PC-9 (cell line): ENCODE measurements at regions of chr4 and their contacts with region 1.

Region 1: DNA sequence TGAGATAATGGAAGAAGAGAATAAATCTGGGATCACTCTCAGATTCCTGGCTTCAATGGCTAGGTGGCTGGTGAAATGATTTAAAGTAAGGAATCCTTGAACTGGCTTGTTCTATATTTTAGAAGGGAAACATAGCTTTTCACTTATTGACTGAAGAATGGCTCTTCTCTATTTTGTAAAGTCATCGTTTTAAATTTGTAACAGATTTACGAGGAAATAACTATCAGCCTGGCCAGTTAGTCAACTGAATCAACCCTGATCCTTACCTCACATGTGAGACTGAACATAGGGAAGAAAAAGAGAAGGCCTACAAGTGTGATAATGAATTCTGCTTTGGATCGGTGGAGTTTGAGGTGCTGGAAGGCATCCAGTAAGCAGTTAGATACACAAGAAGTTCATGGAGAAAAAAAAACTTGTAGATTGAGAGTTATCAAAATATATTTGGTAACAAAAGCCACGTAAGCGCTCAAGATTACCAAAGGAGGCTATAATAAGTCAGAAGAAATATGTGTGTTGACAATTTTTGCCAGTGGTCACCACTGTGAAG is 12.0 kb downstream of the AREG start:
- DNase-seq: no peak
- H3K4me3 ChIP-seq: no peak overlapping the region
- H3K27ac ChIP-seq: no peak overlapping the region
- H3K4me1 ChIP-seq: peaks cover under 1% of the 10 kb centered on the region; the same call in 1 of the 2 replicates
- H3K27me3 ChIP-seq: no peaks in the 10 kb centered on the region
- CTCF ChIP-seq: no peak

Region 2: GRCh38 chr4:74516321-74516720 is 59.4 kb after region 1 on chr4:
- CTCF ChIA-PET with region 1: no interaction called
- POLR2A ChIA-PET with region 1: interaction called, 22 read pairs
- intact Hi-C with region 1: no loop called
- DNase-seq: peak in 1 of 2 experiments; percentile 55
- H3K4me3 ChIP-seq: no peak overlapping the region
- H3K27ac ChIP-seq: no peak overlapping the region
- H3K4me1 ChIP-seq: peaks cover 9% of the 10 kb centered on the region
- H3K27me3 ChIP-seq: no peaks in the 10 kb centered on the region
- CTCF ChIP-seq: no peak